Dorsolateral prefrontal cortex (tissue), 120 donors: ENCODE measurements at regions of chr5 and their contacts with region 1.

Region 1: DNA sequence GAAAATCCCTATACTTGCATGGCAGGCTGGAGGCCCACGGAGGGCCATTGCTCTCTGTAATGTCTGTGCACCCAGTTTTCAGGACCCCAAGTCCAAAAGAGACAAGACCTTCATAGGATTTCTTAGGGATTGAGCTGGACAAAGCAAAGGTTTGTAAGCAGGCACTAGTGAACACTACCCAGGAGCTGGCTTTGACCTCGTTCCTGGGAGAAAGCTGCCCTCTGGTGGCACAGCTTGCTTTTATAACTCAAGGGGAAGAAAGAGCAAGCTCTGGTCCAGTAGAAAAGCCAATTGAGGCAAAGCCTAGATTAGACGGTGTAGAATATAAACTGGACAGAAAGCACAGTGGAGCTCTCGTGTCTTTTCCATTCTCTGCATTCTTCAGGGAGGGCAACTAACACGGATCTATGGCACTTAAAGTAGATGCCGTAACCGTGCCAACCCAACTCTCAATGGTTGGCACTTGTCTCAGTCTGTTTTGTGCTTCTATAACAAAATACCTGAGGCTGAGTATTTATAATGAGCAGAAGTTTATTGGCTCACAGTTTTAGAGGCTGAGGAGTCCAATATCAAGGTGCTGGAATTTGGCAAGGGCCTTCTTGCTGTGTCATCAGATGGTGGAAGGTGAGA is 7.9 kb downstream of the GABRP start:
- DNase-seq: peak in 7 of 10 donors; percentile 28 to 80 (median 64)
- H3K4me3 ChIP-seq: no peak overlapping the region
- H3K27ac ChIP-seq: no peak overlapping the region
- H3K27me3 ChIP-seq: peaks cover 0 to under 1% (median 0%) of the 10 kb centered on the region in 45 donors
- CTCF ChIP-seq: peak; percentile 23 to 81 (median 62)

Region 2: GRCh38 chr5:169923988-169924387 is 867.5 kb before region 1 on chr5:
- intact Hi-C with region 1: no loop called
- DNase-seq: no peak
- H3K4me3 ChIP-seq: no peak overlapping the region
- H3K27ac ChIP-seq: no peak overlapping the region
- H3K27me3 ChIP-seq: no peaks in the 10 kb centered on the region
- CTCF ChIP-seq: no peak

Region 3: GRCh38 chr5:170638454-170639220 is 152.8 kb before region 1 on chr5:
- intact Hi-C with region 1: loop called (anchors 2 to 5 kb)
- DNase-seq: peak in 9 of 10 donors; percentile 45 to 86 (median 67)
- H3K4me3 ChIP-seq: no peak overlapping the region
- H3K27ac ChIP-seq: no peak overlapping the region
- H3K27me3 ChIP-seq: peaks cover 0 to 18% (median 0%) of the 10 kb centered on the region in 45 donors
- CTCF ChIP-seq: peak; percentile 62 to 92 (median 82)

Region 4: GRCh38 chr5:170747851-170748250 is 43.6 kb before region 1 on chr5:
- intact Hi-C with region 1: loop called (anchors 2 to 5 kb)
- DNase-seq: no peak
- H3K4me3 ChIP-seq: no peak overlapping the region
- H3K27ac ChIP-seq: no peak overlapping the region
- H3K27me3 ChIP-seq: peaks cover 0 to 50% (median 12%) of the 10 kb centered on the region in 45 donors
- CTCF ChIP-seq: peak in 36 of 56 donors; percentile 8 to 46 (median 27)